Naive thymus-derived CD4-positive, alpha-beta T cell (primary cell): ENCODE measurements at regions of chr17 and their contacts with region 1.

Region 1: GRCh38 chr17:77444984-77445759 is 304.4 kb downstream of the SEC14L1 start:
- DNase-seq: peak; percentile 68 to 96 (median 94)
- ATAC-seq: peak; percentile 84
- H3K4me3 ChIP-seq: peak overlapping the region; percentile 57
- H3K4me3 Mint-ChIP-seq: peak overlapping the region; percentile 77 to 98 (median 86)
- H3K27ac ChIP-seq: peak overlapping the region; percentile 92
- H3K27ac Mint-ChIP-seq: peak overlapping the region; percentile 93 to 100 (median 99)
- H3K4me1 ChIP-seq: peaks cover 90 to 91% of the 10 kb centered on the region in 2 donors
- H3K4me1 Mint-ChIP-seq: peaks cover 73 to 99% (median 93%) of the 10 kb centered on the region in 7 donors
- H3K27me3 ChIP-seq: no peaks in the 10 kb centered on the region
- H3K27me3 Mint-ChIP-seq: no peaks in the 10 kb centered on the region

Region 2: DNA sequence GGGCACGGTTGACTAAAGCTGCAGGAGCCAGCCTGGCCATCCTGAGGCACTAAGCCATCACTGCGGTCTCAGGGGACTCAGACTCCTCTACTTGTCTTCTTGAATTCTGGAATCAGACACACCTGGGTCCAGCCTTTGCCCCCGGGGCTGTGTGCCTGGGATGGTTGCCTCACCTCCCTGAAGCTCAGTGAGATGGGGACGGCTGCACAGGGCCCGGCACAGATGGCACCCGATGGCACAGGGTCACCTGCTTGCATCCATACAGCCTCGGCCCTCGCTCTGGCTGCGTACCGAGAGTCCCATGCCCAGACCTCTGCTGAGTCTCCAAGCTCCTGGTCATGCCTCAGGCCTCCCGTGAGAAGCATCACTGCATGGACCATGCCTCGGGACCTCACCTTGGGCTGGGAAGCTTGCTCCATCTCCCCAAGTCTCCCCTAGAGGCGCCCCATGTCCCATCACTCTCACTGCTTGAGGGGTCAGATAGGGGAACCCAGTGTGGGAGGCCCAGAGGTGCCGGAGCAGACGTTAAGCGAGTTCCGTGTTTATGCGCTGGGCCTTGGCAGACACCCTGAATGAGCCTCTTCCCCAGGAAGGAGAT is 11.9 kb after region 1 on chr17:
- CTCF ChIA-PET with region 1: interaction called, 21 read pairs
- POLR2A ChIA-PET with region 1: interaction called, 3,353 read pairs
- intact Hi-C with region 1: loop called (anchors 1 kb)
- DNase-seq: peak in 3 of 9 donors; percentile 17 to 44 (median 40)
- ATAC-seq: peak; percentile 35
- H3K4me3 ChIP-seq: peak overlapping the region; percentile 77
- H3K4me3 Mint-ChIP-seq: peak overlapping the region; percentile 92 to 100 (median 98)
- H3K27ac ChIP-seq: peak overlapping the region; percentile 92
- H3K27ac Mint-ChIP-seq: peak overlapping the region; percentile 93 to 100 (median 98)
- H3K4me1 ChIP-seq: peaks cover 46 to 57% of the 10 kb centered on the region in 2 donors
- H3K4me1 Mint-ChIP-seq: peaks cover 34 to 76% (median 48%) of the 10 kb centered on the region in 7 donors
- H3K27me3 ChIP-seq: no peaks in the 10 kb centered on the region
- H3K27me3 Mint-ChIP-seq: no peaks in the 10 kb centered on the region

Region 3: GRCh38 chr17:77471984-77472461 is 26.9 kb after region 1 on chr17:
- CTCF ChIA-PET with region 1: interaction called, 4 read pairs
- POLR2A ChIA-PET with region 1: interaction called, 678 read pairs
- intact Hi-C with region 1: no loop called
- DNase-seq: no peak
- ATAC-seq: no peak
- H3K4me3 ChIP-seq: peak overlapping the region; percentile 15
- H3K4me3 Mint-ChIP-seq: peak overlapping the region; percentile 67 to 90 (median 74)
- H3K27ac ChIP-seq: peak overlapping the region; percentile 71
- H3K27ac Mint-ChIP-seq: peak overlapping the region; percentile 87 to 99 (median 94)
- H3K4me1 ChIP-seq: peaks cover 90 to 99% of the 10 kb centered on the region in 2 donors
- H3K4me1 Mint-ChIP-seq: peaks cover 85 to 100% (median 92%) of the 10 kb centered on the region in 7 donors
- H3K27me3 ChIP-seq: no peaks in the 10 kb centered on the region
- H3K27me3 Mint-ChIP-seq: no peaks in the 10 kb centered on the region

Region 4: GRCh38 chr17:77628035-77628434 is 182.9 kb after region 1 on chr17:
- CTCF ChIA-PET with region 1: no interaction called
- POLR2A ChIA-PET with region 1: no interaction called
- intact Hi-C with region 1: no loop called
- DNase-seq: no peak
- ATAC-seq: no peak
- H3K4me3 ChIP-seq: no peak overlapping the region
- H3K4me3 Mint-ChIP-seq: no peak overlapping the region
- H3K27ac ChIP-seq: no peak overlapping the region
- H3K27ac Mint-ChIP-seq: no peak overlapping the region
- H3K4me1 ChIP-seq: no peaks in the 10 kb centered on the region
- H3K4me1 Mint-ChIP-seq: peaks cover 0 to 2% (median 0%) of the 10 kb centered on the region in 7 donors
- H3K27me3 ChIP-seq: no peaks in the 10 kb centered on the region
- H3K27me3 Mint-ChIP-seq: peaks cover 0 to 28% (median 4%) of the 10 kb centered on the region in 5 donors

Region 5: GRCh38 chr17:77881545-77881944 is 436.4 kb after region 1 on chr17:
- CTCF ChIA-PET with region 1: no interaction called
- POLR2A ChIA-PET with region 1: no interaction called
- intact Hi-C with region 1: loop called (anchors 10 kb)
- DNase-seq: peak; percentile 35 to 78 (median 45)
- ATAC-seq: peak; percentile 70
- H3K4me3 ChIP-seq: peak overlapping the region; percentile 61
- H3K4me3 Mint-ChIP-seq: peak overlapping the region; percentile 71 to 94 (median 81)
- H3K27ac ChIP-seq: peak overlapping the region; percentile 93
- H3K27ac Mint-ChIP-seq: peak overlapping the region; percentile 92 to 99 (median 98)
- H3K4me1 ChIP-seq: peaks cover 62 to 79% of the 10 kb centered on the region in 2 donors
- H3K4me1 Mint-ChIP-seq: peaks cover 58 to 98% (median 89%) of the 10 kb centered on the region in 7 donors
- H3K27me3 ChIP-seq: no peaks in the 10 kb centered on the region
- H3K27me3 Mint-ChIP-seq: peaks cover 0 to 17% (median 0%) of the 10 kb centered on the region in 5 donors

Region 6: GRCh38 chr17:78133971-78134898 is 689.1 kb after region 1 on chr17:
- CTCF ChIA-PET with region 1: no interaction called
- POLR2A ChIA-PET with region 1: interaction called, 15 read pairs
- intact Hi-C with region 1: loop called (anchors 5 kb)
- DNase-seq: peak in 8 of 9 donors; percentile 72 to 89 (median 84)
- ATAC-seq: peak; percentile 58
- H3K4me3 ChIP-seq: peak overlapping the region; percentile 95
- H3K4me3 Mint-ChIP-seq: peak overlapping the region; percentile 81 to 99 (median 92)
- H3K27ac ChIP-seq: peak overlapping the region; percentile 77
- H3K27ac Mint-ChIP-seq: peak overlapping the region; percentile 68 to 95 (median 87)
- H3K4me1 ChIP-seq: peaks cover 56 to 66% of the 10 kb centered on the region in 2 donors
- H3K4me1 Mint-ChIP-seq: peaks cover 55 to 73% (median 66%) of the 10 kb centered on the region in 7 donors
- H3K27me3 ChIP-seq: no peaks in the 10 kb centered on the region
- H3K27me3 Mint-ChIP-seq: peaks cover 0 to 3% (median 0%) of the 10 kb centered on the region in 5 donors